ENCODE measurements at regions of chr12 and their contacts with region 1.

Region 1: DNA sequence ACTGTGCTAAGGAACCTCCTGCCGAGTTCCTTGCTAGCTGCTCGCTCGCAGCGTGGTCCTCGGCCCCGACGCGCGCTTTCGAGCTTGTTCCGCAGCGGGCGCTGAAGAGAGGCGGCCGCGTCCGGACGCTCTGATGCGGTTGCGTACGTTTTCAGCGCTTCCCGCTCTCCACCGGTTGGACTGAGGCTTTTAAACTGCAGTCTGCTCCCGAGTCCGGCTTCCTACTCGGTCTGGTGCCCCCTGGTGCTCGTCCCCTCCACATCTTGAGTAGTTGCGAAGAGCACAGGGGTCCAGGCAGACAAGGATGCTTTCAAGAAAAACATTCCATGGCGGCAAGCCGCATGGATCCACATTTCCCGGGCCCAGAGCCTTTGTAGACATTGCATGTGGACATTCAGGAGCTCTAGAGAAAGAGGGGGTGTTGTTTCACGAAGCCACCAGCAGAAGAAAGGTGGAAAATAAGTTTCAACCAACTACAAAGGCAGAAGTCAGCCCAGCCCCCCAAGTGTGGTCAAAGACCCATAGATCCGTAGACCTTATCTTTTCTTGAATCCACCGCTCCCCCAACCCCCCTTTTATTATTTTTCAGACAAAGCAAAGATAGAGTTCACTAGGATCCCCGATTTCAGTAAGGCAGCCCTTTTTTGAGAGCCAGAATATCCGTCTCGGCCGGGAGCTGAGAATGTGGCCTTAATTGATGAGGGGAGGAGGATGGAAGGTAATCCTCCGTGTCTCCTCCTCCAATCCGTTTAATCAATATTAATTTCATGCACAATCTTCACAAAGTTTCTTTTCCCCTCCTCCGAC is 984 bp upstream of the WNK1 start:
- DNase-seq: peak; percentile 94 to 95
- H3K4me3 ChIP-seq: peak overlapping the region; percentile 92 to 94
- H3K27ac ChIP-seq: peak overlapping the region; percentile 98 to 100
- H3K4me1 ChIP-seq: peaks cover 3 to 19% (median 7%) of the 10 kb centered on the region in 4 donors
- H3K27me3 ChIP-seq: no peaks in the 10 kb centered on the region
- CTCF ChIP-seq: peak; percentile 61 to 71

Region 2: DNA sequence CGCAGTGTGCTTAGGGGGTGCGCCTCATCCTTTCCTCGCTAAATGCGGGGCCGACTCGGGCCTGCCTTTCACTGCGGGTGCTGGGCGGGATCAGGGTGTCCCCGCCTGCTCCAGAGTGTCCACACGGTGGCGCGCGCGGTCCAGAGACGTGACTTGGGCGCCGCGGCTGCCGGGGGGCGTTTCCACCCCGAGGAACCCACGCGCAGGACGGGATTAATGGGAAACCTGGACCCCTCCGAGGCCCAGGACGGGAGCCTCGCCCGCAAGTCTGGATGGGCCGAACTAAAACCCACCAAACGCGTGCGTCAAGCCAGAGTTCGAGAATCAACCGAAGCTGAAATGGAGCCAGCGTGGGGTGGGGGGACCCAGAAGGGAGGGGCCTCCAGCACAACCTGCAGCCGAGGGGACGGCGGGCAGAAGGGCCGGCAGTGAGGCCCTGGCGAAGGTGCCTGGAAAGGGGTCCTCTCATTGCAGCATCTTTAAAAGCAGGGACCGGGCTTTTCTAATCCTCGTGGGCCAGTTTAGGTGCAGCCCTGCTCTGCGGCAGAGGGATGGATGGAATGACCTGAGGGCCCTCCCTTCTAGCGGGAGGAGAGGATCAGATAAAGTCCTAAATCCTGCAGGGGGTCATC is 181.5 kb before region 1 on chr12:
- intact Hi-C with region 1: loop called (anchors 2 kb)
- DNase-seq: peak; percentile 87 to 92
- H3K4me3 ChIP-seq: peak overlapping the region; percentile 67 to 79
- H3K27ac ChIP-seq: peak overlapping the region; percentile 87 to 94
- H3K4me1 ChIP-seq: peaks cover 0 to 30% (median 23%) of the 10 kb centered on the region in 4 donors
- H3K27me3 ChIP-seq: no peaks in the 10 kb centered on the region
- CTCF ChIP-seq: peak; percentile 90 to 97

Region 3: DNA sequence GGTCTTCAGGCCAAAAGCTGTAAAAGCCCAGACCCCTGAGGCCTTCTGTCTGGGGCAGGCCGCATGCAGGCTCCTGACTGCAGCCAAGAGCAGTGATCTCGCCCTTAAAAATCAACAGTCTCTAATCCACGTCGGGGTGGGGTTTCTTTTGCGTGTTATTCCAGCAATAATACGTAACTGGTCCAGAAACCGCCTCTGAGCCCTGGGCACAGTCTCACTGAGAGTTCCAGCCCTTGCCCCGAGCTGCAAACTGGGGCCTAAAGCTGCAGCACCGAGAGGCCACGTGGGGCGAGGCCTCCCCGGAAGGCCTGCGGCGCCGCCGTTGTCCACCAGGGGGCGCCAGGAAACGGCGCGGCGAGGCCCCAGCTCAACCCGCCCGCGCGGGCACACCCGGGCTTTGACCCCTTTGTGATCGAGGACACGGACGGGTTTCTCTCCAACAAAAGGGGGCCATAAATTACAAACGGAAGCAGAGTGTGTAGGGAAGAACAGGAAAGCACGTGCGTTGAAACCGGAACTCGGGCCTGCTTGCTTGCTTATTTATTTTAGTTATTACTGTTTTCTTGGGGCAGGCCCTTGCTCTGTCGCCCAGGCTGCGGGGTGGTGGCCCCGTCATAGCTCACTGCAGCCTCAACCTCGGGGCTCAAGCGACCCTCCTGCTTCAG is 175.3 kb before region 1 on chr12:
- intact Hi-C with region 1: loop called (anchors 2 kb)
- DNase-seq: peak; percentile 83 to 89
- H3K4me3 ChIP-seq: peak overlapping the region; percentile 16 to 28
- H3K27ac ChIP-seq: peak overlapping the region; percentile 73 to 77
- H3K4me1 ChIP-seq: peaks cover 0 to 36% (median 29%) of the 10 kb centered on the region in 4 donors
- H3K27me3 ChIP-seq: no peaks in the 10 kb centered on the region
- CTCF ChIP-seq: peak; percentile 99

Region 4: DNA sequence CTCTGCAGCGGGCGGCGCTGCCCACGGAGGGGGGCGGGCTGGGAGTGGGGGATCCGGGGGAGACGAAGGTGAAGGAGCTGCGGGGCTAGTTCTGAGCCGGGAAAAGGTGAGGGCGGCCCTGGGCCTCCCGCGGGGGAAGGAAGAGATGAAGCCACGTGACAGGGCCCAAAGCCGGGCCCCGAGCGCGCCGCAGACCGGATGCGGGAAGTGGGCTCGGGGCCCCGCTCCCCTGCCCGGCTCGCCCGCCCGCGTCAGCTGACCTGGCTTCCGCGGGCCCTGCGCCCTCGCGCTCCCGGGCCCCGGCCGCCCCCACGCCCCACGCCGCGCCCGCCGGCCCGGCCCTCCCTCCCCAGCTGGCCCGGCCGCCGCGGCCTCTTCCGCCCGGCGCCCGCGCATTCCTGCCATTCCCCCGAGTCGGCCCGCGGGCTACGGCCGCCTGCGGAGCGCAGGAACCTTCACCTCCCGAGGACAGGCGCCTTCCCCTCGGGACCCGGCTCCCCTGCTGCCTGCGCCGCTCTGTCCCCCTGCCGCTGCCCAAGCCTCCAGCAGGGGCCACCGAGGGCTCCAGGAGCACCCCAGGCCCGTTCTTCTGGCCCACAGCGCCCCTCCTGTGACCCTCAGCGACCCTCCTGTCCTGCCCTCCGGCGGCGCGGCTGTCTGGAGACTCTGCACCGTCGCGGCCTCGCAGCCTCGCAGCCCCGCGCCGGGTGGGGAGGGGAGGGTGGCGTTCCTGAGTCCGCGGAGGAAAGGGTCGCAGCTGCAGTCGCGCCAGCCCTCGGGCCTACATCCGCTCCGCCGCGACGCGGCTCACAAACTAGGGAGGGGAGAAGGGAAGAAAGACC is 108.5 kb before region 1 on chr12:
- intact Hi-C with region 1: loop called (anchors 10 kb)
- DNase-seq: peak; percentile 62 to 87
- H3K4me3 ChIP-seq: peak overlapping the region; percentile 65 to 74
- H3K27ac ChIP-seq: peak overlapping the region; percentile 93 to 99
- H3K4me1 ChIP-seq: peaks cover 0 to 53% (median 35%) of the 10 kb centered on the region in 4 donors
- H3K27me3 ChIP-seq: no peaks in the 10 kb centered on the region
- CTCF ChIP-seq: peak; percentile 15 to 40

Region 5: GRCh38 chr12:712172-712863 is 39.1 kb before region 1 on chr12:
- intact Hi-C with region 1: no loop called
- DNase-seq: no peak
- H3K4me3 ChIP-seq: no peak overlapping the region
- H3K27ac ChIP-seq: no peak overlapping the region
- H3K4me1 ChIP-seq: no peaks in the 10 kb centered on the region
- H3K27me3 ChIP-seq: no peaks in the 10 kb centered on the region
- CTCF ChIP-seq: no peak

Region 6: DNA sequence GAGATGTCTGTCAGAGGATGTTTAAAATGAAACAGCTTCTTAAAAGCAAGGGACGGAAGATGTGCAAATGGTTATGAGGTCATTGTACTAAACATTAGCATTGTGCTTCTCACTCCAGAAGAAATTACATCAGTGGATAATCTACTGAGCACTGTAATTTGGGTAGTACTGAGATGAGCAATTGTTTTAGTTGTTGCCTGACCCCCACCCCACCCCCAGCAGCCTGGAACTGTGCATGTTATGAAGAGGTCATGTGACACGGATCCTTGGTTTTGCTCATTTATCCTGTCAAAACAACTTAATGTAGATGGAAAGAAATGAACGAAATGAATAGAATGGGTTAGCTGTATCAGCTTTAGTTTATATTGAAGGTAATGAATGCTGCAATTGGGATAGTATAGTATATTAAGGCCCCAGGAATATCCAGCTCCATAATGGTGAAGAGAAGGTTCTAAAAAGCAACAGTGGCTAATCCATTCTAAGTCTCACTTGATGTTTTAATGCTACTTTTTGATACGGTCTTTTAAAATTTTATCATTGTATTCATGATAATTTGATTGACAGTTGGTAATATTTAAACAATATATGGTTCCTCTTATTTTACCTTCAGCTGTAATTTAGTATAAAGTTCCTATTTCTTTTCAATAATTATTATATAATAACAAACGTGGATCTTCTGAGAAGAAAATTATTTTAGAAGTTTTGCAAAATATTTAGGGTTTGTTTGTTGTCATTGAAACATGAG is 59.4 kb after region 1 on chr12:
- intact Hi-C with region 1: loop called (anchors 10 kb)
- DNase-seq: no peak
- H3K4me3 ChIP-seq: no peak overlapping the region
- H3K27ac ChIP-seq: no peak overlapping the region
- H3K4me1 ChIP-seq: peaks cover 0 to 43% (median 17%) of the 10 kb centered on the region in 4 donors
- H3K27me3 ChIP-seq: no peaks in the 10 kb centered on the region
- CTCF ChIP-seq: no peak

Region 7: GRCh38 chr12:977156-977555 is 225.8 kb after region 1 on chr12:
- intact Hi-C with region 1: no loop called
- DNase-seq: no peak
- H3K4me3 ChIP-seq: no peak overlapping the region
- H3K27ac ChIP-seq: no peak overlapping the region
- H3K4me1 ChIP-seq: no peaks in the 10 kb centered on the region
- H3K27me3 ChIP-seq: no peaks in the 10 kb centered on the region
- CTCF ChIP-seq: no peak